ENCODE measurements at regions of chr4 and their contacts with region 1.

Region 1: DNA sequence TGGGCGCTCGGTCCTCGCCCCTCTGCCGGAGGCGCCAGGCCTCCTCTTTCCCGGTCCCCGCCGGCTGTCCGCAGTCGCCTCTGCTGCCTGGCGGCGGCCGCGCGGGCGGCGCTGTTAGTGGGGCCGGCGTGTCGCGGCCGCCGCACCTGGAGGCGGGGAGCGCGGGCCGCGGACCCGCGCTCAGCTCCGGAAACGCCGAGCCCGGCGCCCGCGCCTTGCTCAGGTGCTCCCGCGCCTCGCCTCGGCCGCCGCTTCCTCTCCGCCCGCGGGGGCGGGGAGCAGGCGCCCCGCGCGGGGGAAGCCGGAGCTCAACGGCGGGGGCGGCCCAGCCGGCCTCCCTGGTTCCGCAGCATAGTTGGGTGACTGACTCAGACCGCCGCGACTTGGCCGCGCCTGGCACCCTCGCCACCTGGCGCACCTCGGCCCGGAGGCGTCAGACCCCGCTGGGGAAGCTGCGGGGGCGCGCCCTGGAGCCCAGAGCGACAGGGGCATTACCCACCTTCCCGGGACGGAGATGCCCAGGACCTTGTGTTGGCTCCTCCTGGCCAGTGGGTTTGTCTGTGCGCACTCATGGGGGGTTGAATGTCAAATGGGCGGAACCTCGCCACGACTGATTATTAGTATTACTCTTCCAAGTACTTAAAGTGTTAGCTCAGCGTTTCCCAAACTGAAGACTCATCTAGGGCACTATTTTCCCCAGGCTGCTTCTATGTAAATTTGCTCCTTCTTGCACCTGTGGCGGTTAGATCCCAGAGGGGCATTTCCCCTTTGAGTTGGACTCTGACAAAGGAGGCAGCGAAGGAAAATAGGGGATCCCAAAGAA is at the start of gene ARAP2:
- DNase-seq: peak; percentile 61 to 84 (median 71)
- ATAC-seq: peak; percentile 84
- H3K4me3 ChIP-seq: peak within 1 kb of the TSS; percentile 67
- H3K4me3 Mint-ChIP-seq: peak within 1 kb of the TSS; percentile 82 to 97 (median 94)
- H3K27ac ChIP-seq: peak within 1 kb of the TSS; percentile 88
- H3K27ac Mint-ChIP-seq: peak within 1 kb of the TSS; percentile 89 to 96 (median 94)
- H3K4me1 ChIP-seq: peaks cover 7 to 23% of the 10 kb centered on the region in 2 donors
- H3K4me1 Mint-ChIP-seq: peaks cover 25 to 46% (median 36%) of the 10 kb centered on the region in 7 donors
- H3K27me3 ChIP-seq: no peaks in the 10 kb centered on the region
- H3K27me3 Mint-ChIP-seq: peaks cover 0 to 15% (median 0%) of the 10 kb centered on the region in 5 donors
- total RNA-seq, gene ARAP2: 39.7 to 78.5 (median 44.7) TPM

Region 2: GRCh38 chr4:36159208-36159607 is 85.3 kb before region 1 on chr4:
- CTCF ChIA-PET with region 1: interaction called, 4 read pairs
- POLR2A ChIA-PET with region 1: no interaction called
- intact Hi-C with region 1: loop called in 1 of 2 experiments (anchors 5 kb)
- DNase-seq: no peak
- ATAC-seq: no peak
- H3K4me3 ChIP-seq: no peak overlapping the region
- H3K4me3 Mint-ChIP-seq: no peak overlapping the region
- H3K27ac ChIP-seq: no peak overlapping the region
- H3K27ac Mint-ChIP-seq: no peak overlapping the region
- H3K4me1 ChIP-seq: no peaks in the 10 kb centered on the region
- H3K4me1 Mint-ChIP-seq: peaks cover 0 to 14% (median 0%) of the 10 kb centered on the region in 7 donors
- H3K27me3 ChIP-seq: no peaks in the 10 kb centered on the region
- H3K27me3 Mint-ChIP-seq: no peaks in the 10 kb centered on the region

Region 3: GRCh38 chr4:36230534-36230933 is 13.9 kb before region 1 on chr4:
- CTCF ChIA-PET with region 1: interaction called, 3 read pairs
- POLR2A ChIA-PET with region 1: interaction called, 4 read pairs
- intact Hi-C with region 1: loop called in 1 of 2 experiments (anchors 1 kb)
- DNase-seq: no peak
- ATAC-seq: no peak
- H3K4me3 ChIP-seq: no peak overlapping the region
- H3K4me3 Mint-ChIP-seq: peak overlapping the region in 2 of 10 donors; percentile 15 to 21
- H3K27ac ChIP-seq: no peak overlapping the region
- H3K27ac Mint-ChIP-seq: peak overlapping the region in 3 of 9 donors; percentile 9 to 30 (median 21)
- H3K4me1 ChIP-seq: peaks cover 15 to 36% of the 10 kb centered on the region in 2 donors
- H3K4me1 Mint-ChIP-seq: peaks cover 37 to 94% (median 81%) of the 10 kb centered on the region in 7 donors
- H3K27me3 ChIP-seq: no peaks in the 10 kb centered on the region
- H3K27me3 Mint-ChIP-seq: no peaks in the 10 kb centered on the region

Region 4: GRCh38 chr4:36269101-36269500 is 24.6 kb after region 1 on chr4:
- CTCF ChIA-PET with region 1: no interaction called
- POLR2A ChIA-PET with region 1: interaction called, 5 read pairs
- intact Hi-C with region 1: loop called (anchors 1 kb)
- DNase-seq: peak in 7 of 9 donors; percentile 27 to 66 (median 47)
- ATAC-seq: peak; percentile 96
- H3K4me3 ChIP-seq: no peak overlapping the region
- H3K4me3 Mint-ChIP-seq: no peak overlapping the region
- H3K27ac ChIP-seq: no peak overlapping the region
- H3K27ac Mint-ChIP-seq: peak overlapping the region in 8 of 9 donors; percentile 10 to 85 (median 52)
- H3K4me1 ChIP-seq: peaks cover 7 to 27% of the 10 kb centered on the region in 2 donors
- H3K4me1 Mint-ChIP-seq: peaks cover 2 to 46% (median 32%) of the 10 kb centered on the region in 7 donors
- H3K27me3 ChIP-seq: no peaks in the 10 kb centered on the region
- H3K27me3 Mint-ChIP-seq: peaks cover 0 to 3% (median 0%) of the 10 kb centered on the region in 5 donors

Region 5: GRCh38 chr4:36322921-36323354 is 78.5 kb after region 1 on chr4:
- CTCF ChIA-PET with region 1: no interaction called
- POLR2A ChIA-PET with region 1: interaction called, 4 read pairs
- intact Hi-C with region 1: loop called (anchors 1 to 2 kb)
- DNase-seq: peak in 8 of 9 donors; percentile 37 to 81 (median 66)
- ATAC-seq: peak; percentile 86
- H3K4me3 ChIP-seq: peak overlapping the region; percentile 6
- H3K4me3 Mint-ChIP-seq: peak overlapping the region in 9 of 10 donors; percentile 51 to 79 (median 65)
- H3K27ac ChIP-seq: no peak overlapping the region
- H3K27ac Mint-ChIP-seq: peak overlapping the region; percentile 44 to 87 (median 72)
- H3K4me1 ChIP-seq: peaks cover 24 to 37% of the 10 kb centered on the region in 2 donors
- H3K4me1 Mint-ChIP-seq: peaks cover 32 to 76% (median 41%) of the 10 kb centered on the region in 7 donors
- H3K27me3 ChIP-seq: no peaks in the 10 kb centered on the region
- H3K27me3 Mint-ChIP-seq: no peaks in the 10 kb centered on the region

Region 6: GRCh38 chr4:36385951-36386571 is 141.6 kb after region 1 on chr4:
- CTCF ChIA-PET with region 1: no interaction called
- POLR2A ChIA-PET with region 1: interaction called, 3 read pairs
- intact Hi-C with region 1: loop called (anchors 2 kb)
- DNase-seq: peak; percentile 8 to 89 (median 82)
- ATAC-seq: peak; percentile 99
- H3K4me3 ChIP-seq: peak overlapping the region; percentile 29
- H3K4me3 Mint-ChIP-seq: peak overlapping the region; percentile 46 to 84 (median 70)
- H3K27ac ChIP-seq: peak overlapping the region; percentile 70
- H3K27ac Mint-ChIP-seq: peak overlapping the region; percentile 92 to 99 (median 94)
- H3K4me1 ChIP-seq: peaks cover 22% of the 10 kb centered on the region in 2 donors
- H3K4me1 Mint-ChIP-seq: peaks cover 19 to 51% (median 40%) of the 10 kb centered on the region in 7 donors
- H3K27me3 ChIP-seq: no peaks in the 10 kb centered on the region
- H3K27me3 Mint-ChIP-seq: peaks cover 0 to 11% (median 0%) of the 10 kb centered on the region in 5 donors

Measured in naive thymus-derived CD4-positive, alpha-beta T cell (primary cell).